ENCODE measurements at regions of chr1 and their contacts with region 1.

Region 1: DNA sequence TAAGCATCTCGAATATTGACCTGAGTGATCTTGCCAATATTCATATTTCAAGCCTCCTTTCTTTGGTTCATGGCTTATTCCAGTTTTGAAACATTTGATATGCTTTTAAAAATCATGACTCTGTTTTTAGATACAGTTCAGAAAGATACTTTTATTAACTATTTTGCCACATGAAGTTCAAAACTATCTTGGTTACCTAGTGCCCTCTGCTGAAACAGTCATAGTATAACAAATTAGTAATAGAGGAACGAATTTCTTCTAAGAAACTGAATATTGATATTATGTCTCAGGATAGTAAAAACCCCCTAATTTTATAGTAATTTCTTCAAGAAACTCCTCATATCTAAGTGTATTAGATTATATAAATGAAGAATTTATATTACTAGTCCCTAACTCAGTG is 52.6 kb upstream of the RC3H1 start:
- DNase-seq: no peak
- H3K4me3 ChIP-seq: no peak overlapping the region
- H3K4me3 Mint-ChIP-seq: no peak overlapping the region
- H3K27ac Mint-ChIP-seq: no peak overlapping the region
- H3K4me1 ChIP-seq: no peaks in the 10 kb centered on the region
- H3K4me1 Mint-ChIP-seq: no peaks in the 10 kb centered on the region
- H3K27me3 ChIP-seq: no peaks in the 10 kb centered on the region
- H3K27me3 Mint-ChIP-seq: peaks cover 15% of the 10 kb centered on the region
- CTCF ChIP-seq: peak; percentile 18 to 27

Region 2: GRCh38 chr1:173986951-173987350 is 87.8 kb before region 1 on chr1:
- CTCF ChIA-PET with region 1: no interaction called
- POLR2A ChIA-PET with region 1: no interaction called
- intact Hi-C with region 1: loop called (anchors 10 kb)
- DNase-seq: no peak
- H3K4me3 ChIP-seq: no peak overlapping the region
- H3K4me3 Mint-ChIP-seq: no peak overlapping the region
- H3K27ac Mint-ChIP-seq: no peak overlapping the region
- H3K4me1 ChIP-seq: no peaks in the 10 kb centered on the region
- H3K4me1 Mint-ChIP-seq: no peaks in the 10 kb centered on the region
- H3K27me3 ChIP-seq: no peaks in the 10 kb centered on the region
- H3K27me3 Mint-ChIP-seq: no peaks in the 10 kb centered on the region
- CTCF ChIP-seq: no peak

Region 3: DNA sequence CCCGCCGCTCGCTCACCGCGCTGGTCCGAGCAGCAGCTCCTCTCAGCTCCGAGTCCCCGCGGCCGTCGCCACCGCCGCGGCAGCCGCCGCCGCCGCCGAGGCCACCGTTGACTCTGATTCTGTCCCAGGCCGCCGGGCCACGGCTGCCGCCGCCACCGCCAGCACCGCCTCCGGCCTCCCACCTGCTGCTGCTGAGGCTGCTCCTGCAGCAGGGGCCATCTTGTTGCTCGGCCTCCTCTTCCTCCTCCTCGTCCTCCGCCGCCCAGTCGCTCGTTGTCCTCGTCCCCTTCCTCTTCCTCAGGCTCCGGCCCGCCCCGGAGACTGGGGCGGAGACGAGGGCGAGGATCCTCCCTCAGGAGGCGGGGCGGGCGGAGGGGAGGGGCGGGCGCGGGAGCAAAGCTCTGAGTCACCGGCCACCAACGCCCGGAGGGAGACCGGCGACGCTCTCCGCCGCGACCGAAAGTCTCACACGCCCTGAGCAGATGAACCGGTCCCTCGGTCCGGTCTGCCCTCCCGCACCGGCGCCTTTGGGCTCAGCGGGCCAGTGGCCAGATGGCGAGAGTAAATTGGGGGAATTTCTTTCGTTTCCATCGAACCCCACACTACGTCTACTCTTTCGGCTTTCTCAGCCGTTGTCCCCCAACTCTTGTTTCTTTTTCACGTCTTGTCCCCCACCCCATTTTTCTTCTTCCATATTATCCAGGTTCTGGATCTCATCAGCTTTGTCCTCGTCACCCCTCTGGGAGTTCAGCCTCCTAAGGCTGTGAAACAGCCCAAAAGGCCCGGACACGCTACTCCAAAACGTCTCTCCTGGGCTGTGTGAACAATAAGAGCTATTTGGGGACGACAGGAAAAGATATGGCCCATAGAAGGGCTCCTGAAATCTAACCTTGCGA is 52.4 kb before region 1 on chr1 and contains the start of gene RC3H1:
- CTCF ChIA-PET with region 1: no interaction called
- POLR2A ChIA-PET with region 1: no interaction called
- intact Hi-C with region 1: loop called (anchors 1 kb)
- DNase-seq: peak; percentile 88
- H3K4me3 ChIP-seq: peak within 1 kb of the TSS; percentile 83
- H3K4me3 Mint-ChIP-seq: peak within 1 kb of the TSS; percentile 84
- H3K27ac Mint-ChIP-seq: peak within 1 kb of the TSS; percentile 97
- H3K4me1 ChIP-seq: peaks cover 14% of the 10 kb centered on the region
- H3K4me1 Mint-ChIP-seq: peaks cover 7% of the 10 kb centered on the region
- H3K27me3 ChIP-seq: no peaks in the 10 kb centered on the region
- H3K27me3 Mint-ChIP-seq: no peaks in the 10 kb centered on the region
- CTCF ChIP-seq: no peak
- total RNA-seq, gene RC3H1: 29.2 and 36.3 TPM in 2 replicates